ENCODE measurements at regions of chr14 and their contacts with region 1.

Region 1: DNA sequence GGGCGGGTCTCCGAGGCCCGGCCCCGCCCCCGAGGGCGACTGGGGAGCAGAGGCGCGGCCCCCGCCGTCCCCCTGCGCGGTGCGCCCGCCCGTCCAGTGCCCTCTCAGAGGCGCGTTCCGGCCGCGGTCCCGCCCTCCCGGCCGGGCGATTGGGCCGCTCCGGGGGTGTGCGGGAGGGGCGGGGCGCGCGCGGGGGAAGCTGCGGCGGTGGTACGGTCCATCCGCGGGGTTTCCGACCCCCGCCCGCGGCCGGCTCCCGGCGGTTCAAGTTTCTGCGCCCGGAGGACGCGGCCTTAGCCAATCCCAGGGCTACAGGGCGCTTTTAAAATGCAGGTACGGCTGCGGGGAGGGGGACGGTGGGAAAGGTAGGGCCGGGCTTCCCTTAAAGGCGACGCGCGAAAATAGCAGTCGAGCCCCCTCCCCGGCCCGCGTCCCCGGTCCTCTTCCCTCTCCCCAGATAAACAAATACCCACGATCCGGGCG is 317 bp upstream of the CCDC85C start:
- DNase-seq: peak; percentile 93 to 96
- ATAC-seq: peak; percentile 92 to 97 (median 96)
- H3K4me3 ChIP-seq: peak overlapping the region; percentile 70 to 97 (median 85)
- H3K27ac ChIP-seq: peak overlapping the region; percentile 52 to 96 (median 90)
- H3K4me1 ChIP-seq: peaks cover 19 to 57% (median 43%) of the 10 kb centered on the region in 9 donors
- H3K27me3 ChIP-seq: peaks cover 0 to 39% (median 0%) of the 10 kb centered on the region in 7 donors
- CTCF ChIP-seq: no peak

Region 2: DNA sequence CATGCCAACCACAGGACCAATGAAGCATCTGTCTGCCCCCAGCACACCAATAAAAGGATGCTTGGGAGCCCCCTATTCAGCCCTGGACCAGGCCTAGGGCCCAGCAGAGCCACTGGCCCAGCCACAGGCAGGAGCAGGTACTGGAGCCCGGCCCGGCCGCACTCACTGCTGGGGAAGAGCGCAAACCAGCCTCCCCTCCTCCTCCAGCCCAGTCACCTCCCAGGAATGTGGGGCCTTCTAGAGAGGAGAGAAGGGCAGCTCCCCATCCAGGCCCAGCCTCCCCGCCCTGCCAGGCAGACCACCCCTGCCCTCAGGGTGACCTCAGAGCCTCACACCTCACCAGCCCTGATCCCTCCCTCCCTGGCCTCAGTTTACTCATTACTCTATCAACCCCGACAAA is 66.9 kb before region 1 on chr14:
- intact Hi-C with region 1: loop called in 1 of 10 experiments (anchors 5 kb)
- DNase-seq: peak; percentile 47
- ATAC-seq: peak; percentile 36 to 80 (median 70)
- H3K4me3 ChIP-seq: no peak overlapping the region
- H3K27ac ChIP-seq: peak overlapping the region in 7 of 10 donors; percentile 45 to 87 (median 73)
- H3K4me1 ChIP-seq: peaks cover 31 to 81% (median 60%) of the 10 kb centered on the region in 9 donors
- H3K27me3 ChIP-seq: no peaks in the 10 kb centered on the region
- CTCF ChIP-seq: no peak

Region 3: GRCh38 chr14:99563233-99564129 is 40.8 kb before region 1 on chr14:
- intact Hi-C with region 1: loop called in 6 of 10 experiments (anchors 5 kb)
- DNase-seq: peak; percentile 79
- ATAC-seq: peak; percentile 68 to 85 (median 76)
- H3K4me3 ChIP-seq: no peak overlapping the region
- H3K27ac ChIP-seq: peak overlapping the region in 7 of 10 donors; percentile 18 to 81 (median 68)
- H3K4me1 ChIP-seq: peaks cover 28 to 85% (median 69%) of the 10 kb centered on the region in 9 donors
- H3K27me3 ChIP-seq: no peaks in the 10 kb centered on the region
- CTCF ChIP-seq: peak in 8 of 9 donors; percentile 27 to 68 (median 44)

Region 4: DNA sequence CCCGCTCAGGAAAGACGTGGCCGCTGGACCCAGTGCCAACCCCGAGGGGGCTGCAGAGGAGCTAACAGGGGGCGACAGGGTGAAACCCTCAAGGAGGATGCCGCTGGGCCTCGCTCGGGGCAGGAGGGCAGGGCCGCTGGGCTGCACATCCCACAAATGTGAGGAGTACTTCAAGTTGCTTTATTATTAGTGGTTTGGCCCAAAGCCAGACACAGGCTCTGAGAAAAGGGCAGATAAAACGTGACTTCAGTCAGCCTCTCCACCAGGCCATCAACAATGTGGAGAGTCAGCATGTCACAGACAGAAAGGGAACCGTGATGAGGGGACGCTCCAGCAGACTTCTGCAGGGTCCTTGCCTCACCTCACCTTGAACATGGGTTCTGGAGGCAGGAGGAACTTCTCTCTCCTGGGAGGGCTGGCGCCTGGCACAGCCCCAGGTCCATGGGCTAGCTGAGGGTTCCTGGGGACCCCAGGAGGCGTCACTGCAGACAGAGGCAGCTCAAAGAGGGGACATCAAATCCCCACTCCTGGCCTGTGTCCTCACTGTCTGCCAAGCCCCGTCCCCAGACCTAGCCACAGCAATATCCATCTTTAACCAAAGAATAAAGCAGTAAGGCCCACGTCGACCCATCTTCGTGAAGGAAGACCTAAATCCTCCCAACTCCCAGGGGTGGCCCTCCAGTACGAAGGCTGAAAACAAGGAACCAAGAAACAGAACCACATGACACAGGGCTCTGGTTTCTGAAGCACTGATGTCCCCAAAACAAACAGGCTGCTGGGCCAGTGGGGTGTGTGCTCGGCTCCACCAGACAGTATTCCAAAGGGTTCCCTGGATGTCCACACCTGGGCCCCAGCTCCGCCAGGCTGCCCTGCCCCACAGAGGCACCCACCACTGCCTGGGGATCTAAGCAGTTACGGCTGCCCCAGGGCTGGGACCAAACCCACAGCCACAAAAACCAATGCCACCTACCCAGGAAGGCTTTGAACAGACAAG is 35.5 kb before region 1 on chr14:
- intact Hi-C with region 1: loop called in 6 of 10 experiments (anchors 5 kb)
- DNase-seq: peak; percentile 59 to 67
- ATAC-seq: peak; percentile 20 to 49 (median 35)
- H3K4me3 ChIP-seq: no peak overlapping the region
- H3K27ac ChIP-seq: peak overlapping the region in 9 of 10 donors; percentile 40 to 92 (median 70)
- H3K4me1 ChIP-seq: peaks cover 37 to 100% (median 95%) of the 10 kb centered on the region in 9 donors
- H3K27me3 ChIP-seq: no peaks in the 10 kb centered on the region
- CTCF ChIP-seq: no peak

Measured in heart right ventricle (tissue), 16 donors.